CD8-positive, alpha-beta T cell (primary cell): ENCODE measurements at regions of chr15 and their contacts with region 1.

Region 1: DNA sequence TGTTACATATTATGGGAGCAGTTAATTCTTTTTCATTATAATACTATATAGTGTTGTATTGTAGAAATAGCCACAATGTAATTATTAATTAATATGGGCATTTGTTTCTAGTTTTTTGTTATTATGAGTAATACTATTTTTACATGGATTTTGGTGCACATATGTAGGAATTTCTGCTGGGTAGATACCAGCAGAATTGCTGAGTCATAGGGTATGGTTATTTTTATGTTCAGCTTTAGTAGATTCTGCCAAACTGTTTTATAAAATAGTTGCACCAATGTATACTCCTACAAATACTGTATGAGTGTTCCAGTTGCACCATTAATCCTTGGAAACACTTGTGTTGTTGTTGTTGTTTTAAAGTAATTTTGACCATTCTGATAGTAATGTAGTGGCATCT is 91.5 kb downstream of the SH3GL3 start:
- DNase-seq: no peak
- ATAC-seq: no peak
- H3K4me3 ChIP-seq: no peak overlapping the region
- H3K4me3 Mint-ChIP-seq: no peak overlapping the region
- H3K27ac ChIP-seq: no peak overlapping the region
- H3K27ac Mint-ChIP-seq: no peak overlapping the region
- H3K4me1 ChIP-seq: no peaks in the 10 kb centered on the region
- H3K4me1 Mint-ChIP-seq: no peaks in the 10 kb centered on the region
- H3K27me3 ChIP-seq: no peaks in the 10 kb centered on the region
- H3K27me3 Mint-ChIP-seq: no peaks in the 10 kb centered on the region
- CTCF ChIP-seq: no peak

Region 2: DNA sequence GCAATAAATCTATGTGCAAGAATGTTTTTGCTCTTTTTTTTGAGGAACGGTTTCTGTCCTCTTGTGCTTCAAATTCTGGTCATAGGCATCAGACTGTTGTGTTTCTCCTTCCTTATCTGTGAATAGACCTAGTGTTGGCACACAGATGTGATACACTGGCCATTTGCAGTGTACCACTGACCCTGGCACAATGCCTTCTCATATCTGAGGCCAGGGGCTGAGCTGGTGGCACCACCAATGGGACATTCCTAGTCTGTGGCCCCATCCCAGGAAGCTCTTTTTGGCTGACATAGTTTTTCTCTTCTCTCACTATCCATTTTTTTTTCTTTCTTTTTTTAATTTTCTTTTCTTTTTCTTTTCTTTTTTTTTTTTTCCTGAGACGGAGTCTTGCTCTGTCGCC is 51.2 kb before region 1 on chr15:
- CTCF ChIA-PET with region 1: no interaction called
- POLR2A ChIA-PET with region 1: no interaction called
- intact Hi-C with region 1: loop called in 1 of 2 experiments (anchors 5 kb)
- DNase-seq: no peak
- ATAC-seq: no peak
- H3K4me3 ChIP-seq: no peak overlapping the region
- H3K4me3 Mint-ChIP-seq: no peak overlapping the region
- H3K27ac ChIP-seq: no peak overlapping the region
- H3K27ac Mint-ChIP-seq: no peak overlapping the region
- H3K4me1 ChIP-seq: no peaks in the 10 kb centered on the region
- H3K4me1 Mint-ChIP-seq: no peaks in the 10 kb centered on the region
- H3K27me3 ChIP-seq: no peaks in the 10 kb centered on the region
- H3K27me3 Mint-ChIP-seq: peaks cover 7% of the 10 kb centered on the region
- CTCF ChIP-seq: no peak

Region 3: DNA sequence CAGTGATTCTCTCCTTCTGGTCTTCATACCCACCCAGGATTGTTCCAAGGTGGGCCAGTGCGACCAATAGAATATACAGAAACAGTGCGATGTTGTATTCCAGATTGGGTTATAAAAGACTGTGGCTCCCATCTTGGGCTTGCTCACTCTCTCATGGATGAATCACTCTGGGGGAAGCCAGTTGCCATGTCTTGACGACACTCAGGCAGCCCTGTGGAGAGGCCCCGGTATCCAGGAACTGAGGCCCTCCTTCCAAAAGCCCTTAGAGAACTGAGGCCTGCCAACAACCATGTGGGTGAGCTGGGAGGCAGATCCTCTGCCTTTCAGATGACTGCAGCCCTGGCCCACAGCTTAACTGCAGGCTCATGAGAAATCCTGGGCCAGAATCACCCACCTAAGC is 34.3 kb before region 1 on chr15:
- CTCF ChIA-PET with region 1: no interaction called
- POLR2A ChIA-PET with region 1: no interaction called
- intact Hi-C with region 1: no loop called
- DNase-seq: no peak
- ATAC-seq: no peak
- H3K4me3 ChIP-seq: no peak overlapping the region
- H3K4me3 Mint-ChIP-seq: no peak overlapping the region
- H3K27ac ChIP-seq: no peak overlapping the region
- H3K27ac Mint-ChIP-seq: no peak overlapping the region
- H3K4me1 ChIP-seq: no peaks in the 10 kb centered on the region
- H3K4me1 Mint-ChIP-seq: no peaks in the 10 kb centered on the region
- H3K27me3 ChIP-seq: no peaks in the 10 kb centered on the region
- H3K27me3 Mint-ChIP-seq: no peaks in the 10 kb centered on the region
- CTCF ChIP-seq: no peak